ENCODE measurements at regions of chr20 and their contacts with region 1.

Region 1: GRCh38 chr20:63627129-63627750 is 339 bp upstream of the GMEB2 start:
- DNase-seq: peak; percentile 95 to 97
- ATAC-seq: peak; percentile 82 to 94 (median 83)
- H3K4me3 ChIP-seq: peak overlapping the region; percentile 94
- H3K4me3 Mint-ChIP-seq: peak overlapping the region; percentile 94
- H3K27ac ChIP-seq: peak overlapping the region; percentile 85
- H3K27ac Mint-ChIP-seq: peak overlapping the region; percentile 83 to 89
- H3K4me1 ChIP-seq: peaks cover 40% of the 10 kb centered on the region
- H3K4me1 Mint-ChIP-seq: peaks cover 17 to 29% of the 10 kb centered on the region in 2 donors
- H3K27me3 ChIP-seq: no peaks in the 10 kb centered on the region
- H3K27me3 Mint-ChIP-seq: no peaks in the 10 kb centered on the region
- CTCF ChIP-seq: no peak

Region 2: DNA sequence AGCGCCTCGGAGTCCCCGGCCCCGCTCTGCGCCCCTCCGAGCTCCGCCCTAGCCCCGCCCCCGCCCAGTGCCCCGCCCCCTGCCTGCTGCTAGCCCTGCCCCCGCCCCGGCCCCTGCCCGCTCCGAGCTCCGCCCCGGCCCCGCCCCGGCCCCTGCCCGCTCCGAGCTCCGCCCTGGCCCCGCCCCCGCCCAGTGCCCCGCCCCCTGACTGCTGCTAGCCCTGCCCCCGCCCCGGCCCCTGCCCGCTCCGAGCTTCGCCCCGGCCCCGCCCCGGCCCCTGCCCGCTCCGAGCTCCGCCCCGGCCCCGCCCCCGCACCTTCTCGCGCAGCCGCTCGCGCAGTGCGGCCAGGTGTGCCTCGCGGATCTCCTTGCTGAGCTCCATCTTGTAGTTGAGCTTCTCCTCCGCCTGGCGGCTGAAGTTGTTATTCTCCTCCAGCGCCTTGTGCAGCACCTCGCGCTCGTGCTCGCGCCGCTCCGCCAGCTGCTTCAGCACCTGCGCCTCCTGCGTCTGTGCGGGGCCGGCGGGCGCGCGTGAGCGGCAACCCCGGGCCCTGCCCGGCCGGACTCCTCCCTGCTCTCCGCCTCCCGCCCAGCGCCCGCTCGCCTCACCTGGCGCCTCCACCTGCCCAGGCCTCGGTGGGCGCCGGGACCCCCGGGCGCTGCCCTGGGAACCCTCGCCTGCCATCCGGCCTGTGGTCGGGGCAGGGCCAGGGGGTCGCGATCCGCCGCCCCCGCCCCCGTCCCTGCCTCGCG is 14.7 kb after region 1 on chr20:
- intact Hi-C with region 1: loop called (anchors 2 kb)
- DNase-seq: peak; percentile 86 to 96
- ATAC-seq: peak; percentile 67 to 91 (median 68)
- H3K4me3 ChIP-seq: peak overlapping the region; percentile 75
- H3K4me3 Mint-ChIP-seq: peak overlapping the region; percentile 78
- H3K27ac ChIP-seq: peak overlapping the region; percentile 90
- H3K27ac Mint-ChIP-seq: peak overlapping the region; percentile 68 to 82
- H3K4me1 ChIP-seq: peaks cover 48% of the 10 kb centered on the region
- H3K4me1 Mint-ChIP-seq: peaks cover 22 to 37% of the 10 kb centered on the region in 2 donors
- H3K27me3 ChIP-seq: no peaks in the 10 kb centered on the region
- H3K27me3 Mint-ChIP-seq: no peaks in the 10 kb centered on the region
- CTCF ChIP-seq: peak; percentile 42

Region 3: DNA sequence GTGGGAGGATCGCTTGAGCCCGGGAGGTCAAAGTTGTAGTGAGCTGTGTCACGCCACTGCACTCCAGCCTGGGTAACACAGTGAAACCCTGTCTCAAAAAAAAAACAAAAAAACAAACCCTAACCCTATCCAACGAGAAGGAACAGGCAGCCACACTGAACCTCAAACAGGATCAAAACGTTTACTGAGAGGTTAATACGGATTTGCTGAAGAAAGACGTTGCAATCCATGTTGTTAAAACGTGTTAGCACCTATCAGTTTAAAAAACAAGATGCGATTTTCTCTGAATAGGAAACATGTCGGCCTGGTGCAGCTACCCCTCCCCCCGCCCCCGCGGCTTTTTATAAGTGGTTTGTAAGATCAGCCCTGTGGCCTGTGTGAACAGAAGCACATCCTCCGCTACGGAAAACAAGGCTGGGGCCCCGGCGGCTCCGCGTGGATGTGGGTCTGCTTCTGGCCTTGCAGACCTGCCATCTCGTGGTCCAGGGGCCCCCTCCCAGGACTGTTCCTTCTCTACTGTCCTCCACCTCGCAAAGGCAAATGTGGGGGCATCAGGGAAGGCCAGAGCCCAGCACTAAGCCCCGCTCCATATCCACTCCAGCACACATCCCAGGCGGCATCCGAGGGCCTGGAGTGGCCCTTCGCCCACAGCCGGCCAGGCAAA is 123.7 kb after region 1 on chr20:
- intact Hi-C with region 1: loop called (anchors 5 kb)
- DNase-seq: peak; percentile 41 to 85
- ATAC-seq: peak; percentile 58 to 88 (median 78)
- H3K4me3 ChIP-seq: no peak overlapping the region
- H3K4me3 Mint-ChIP-seq: peak overlapping the region; percentile 59
- H3K27ac ChIP-seq: peak overlapping the region; percentile 49
- H3K27ac Mint-ChIP-seq: peak overlapping the region; percentile 43 to 73
- H3K4me1 ChIP-seq: peaks cover 27% of the 10 kb centered on the region
- H3K4me1 Mint-ChIP-seq: peaks cover 7 to 27% of the 10 kb centered on the region in 2 donors
- H3K27me3 ChIP-seq: no peaks in the 10 kb centered on the region
- H3K27me3 Mint-ChIP-seq: no peaks in the 10 kb centered on the region
- CTCF ChIP-seq: no peak

Measured in natural killer cell (primary cell).